Dorsolateral prefrontal cortex (tissue), 120 donors: ENCODE measurements at regions of chr6 and their contacts with region 1.

Region 1: GRCh38 chr6:13336553-13336952 is 8.2 kb upstream of the TBC1D7 start:
- DNase-seq: peak; percentile 72 to 93 (median 80)
- H3K4me3 ChIP-seq: peak overlapping the region in 2 of 59 donors; percentile 11 to 19
- H3K27ac ChIP-seq: peak overlapping the region in 5 of 59 donors; percentile 26 to 68 (median 54)
- H3K27me3 ChIP-seq: no peaks in the 10 kb centered on the region
- CTCF ChIP-seq: peak; percentile 83 to 98 (median 93)

Region 2: DNA sequence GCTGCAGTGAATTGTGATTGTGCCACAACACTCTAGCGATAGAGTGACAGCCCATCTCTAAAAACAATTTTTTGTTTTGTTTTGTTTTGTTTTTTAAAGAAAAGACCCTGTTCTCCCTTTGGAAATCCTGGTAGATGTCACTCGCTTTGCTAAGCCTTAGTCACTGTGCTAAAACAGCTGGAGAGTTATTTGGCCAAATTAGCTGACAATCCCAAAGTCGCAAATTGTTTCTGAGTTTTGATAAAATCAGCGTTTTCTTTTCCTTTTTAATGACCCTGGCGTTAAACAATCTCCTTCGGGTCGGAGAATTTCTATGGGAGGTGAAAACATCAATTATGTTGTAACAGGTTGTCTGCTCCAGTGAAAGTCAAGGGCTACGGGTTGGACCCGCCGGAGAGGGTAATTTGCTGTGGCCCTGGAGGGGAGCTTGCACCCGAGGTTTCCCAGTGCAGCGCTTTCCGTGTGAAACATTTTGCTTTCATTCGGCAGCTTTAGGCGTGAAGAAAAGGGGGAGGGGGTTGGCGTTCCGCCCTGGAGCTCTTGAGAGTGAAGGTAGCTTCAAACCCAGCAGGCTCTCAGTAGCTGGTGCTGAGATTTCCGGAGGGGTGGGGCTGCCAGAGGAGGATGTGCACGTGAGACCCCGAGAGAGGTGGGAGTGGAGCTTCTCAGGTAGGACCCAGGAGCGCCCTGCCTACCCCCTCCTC is 323.4 kb before region 1 on chr6:
- intact Hi-C with region 1: loop called in 1 of 2 experiments (anchors 10 kb)
- DNase-seq: peak; percentile 27 to 67 (median 56)
- H3K4me3 ChIP-seq: peak overlapping the region; percentile 51 to 84 (median 71)
- H3K27ac ChIP-seq: peak overlapping the region in 42 of 59 donors; percentile 12 to 87 (median 66)
- H3K27me3 ChIP-seq: no peaks in the 10 kb centered on the region
- CTCF ChIP-seq: no peak

Region 3: GRCh38 chr6:13351271-13351670 is 14.7 kb after region 1 on chr6:
- intact Hi-C with region 1: no loop called
- DNase-seq: peak in 2 of 10 donors; percentile 37 to 50
- H3K4me3 ChIP-seq: peak overlapping the region in 12 of 59 donors; percentile 1 to 39 (median 20)
- H3K27ac ChIP-seq: peak overlapping the region in 49 of 59 donors; percentile 2 to 77 (median 45)
- H3K27me3 ChIP-seq: no peaks in the 10 kb centered on the region
- CTCF ChIP-seq: no peak

Region 4: GRCh38 chr6:13407709-13408695 is 71.4 kb after region 1 on chr6:
- intact Hi-C with region 1: loop called in 1 of 2 experiments (anchors 5 kb)
- DNase-seq: no peak
- H3K4me3 ChIP-seq: peak overlapping the region in 1 of 59 donors; percentile 33
- H3K27ac ChIP-seq: peak overlapping the region in 58 of 59 donors; percentile 50 to 95 (median 87)
- H3K27me3 ChIP-seq: no peaks in the 10 kb centered on the region
- CTCF ChIP-seq: peak in 1 of 56 donors; percentile 8

Region 5: DNA sequence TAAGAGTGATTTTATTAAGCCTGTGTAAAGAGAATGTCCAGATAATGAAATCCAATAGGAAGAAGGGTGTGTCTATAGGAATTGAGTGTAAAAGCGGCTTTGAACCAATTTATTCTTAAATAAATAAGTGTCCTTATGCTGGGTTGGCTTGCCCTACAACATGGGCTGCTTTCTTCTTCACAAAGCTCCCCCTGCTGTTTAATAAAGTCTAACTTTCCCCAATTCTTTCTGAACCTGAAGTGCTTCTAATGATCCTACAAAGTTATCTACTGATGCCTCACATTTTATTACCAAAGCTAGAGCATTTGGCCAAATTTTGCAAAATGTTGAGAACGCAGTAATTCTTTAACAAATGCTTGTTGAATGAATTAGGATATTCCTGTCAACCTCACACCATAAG is 201.5 kb after region 1 on chr6:
- intact Hi-C with region 1: loop called (anchors 2 to 10 kb)
- DNase-seq: no peak
- H3K4me3 ChIP-seq: no peak overlapping the region
- H3K27ac ChIP-seq: peak overlapping the region in 1 of 59 donors; percentile 8
- H3K27me3 ChIP-seq: no peaks in the 10 kb centered on the region
- CTCF ChIP-seq: peak in 54 of 56 donors; percentile 36 to 78 (median 60)

Region 6: DNA sequence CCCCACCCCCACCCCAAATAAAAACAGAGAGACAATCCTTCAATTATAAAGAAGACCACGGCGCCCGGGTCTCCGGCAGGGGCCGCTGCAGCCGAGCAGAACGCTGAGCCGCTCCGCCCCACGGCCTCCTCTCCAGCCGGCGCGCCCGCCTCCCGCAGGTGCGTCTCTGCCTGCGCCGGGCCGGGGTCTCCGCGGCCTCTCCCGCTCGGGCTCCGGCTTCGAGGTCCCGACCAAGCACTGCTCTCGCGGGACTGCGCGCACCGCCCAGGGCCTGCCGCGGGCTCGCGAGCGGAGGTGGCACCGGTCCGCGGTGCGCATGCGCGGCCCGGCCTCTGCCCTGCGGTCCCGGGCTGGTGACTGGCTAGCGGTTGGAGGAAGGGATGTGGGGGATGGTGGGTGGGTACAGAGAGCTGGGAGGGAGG is 237.6 kb after region 1 on chr6:
- intact Hi-C with region 1: loop called (anchors 2 to 10 kb)
- DNase-seq: peak; percentile 70 to 92 (median 84)
- H3K4me3 ChIP-seq: peak overlapping the region; percentile 46 to 96 (median 87)
- H3K27ac ChIP-seq: peak overlapping the region; percentile 75 to 99 (median 97)
- H3K27me3 ChIP-seq: no peaks in the 10 kb centered on the region
- CTCF ChIP-seq: peak; percentile 26 to 78 (median 60)

Region 7: GRCh38 chr6:14066782-14067406 is 730.3 kb after region 1 on chr6:
- intact Hi-C with region 1: loop called in 1 of 2 experiments (anchors 10 kb)
- DNase-seq: peak in 1 of 10 donors; percentile 28
- H3K4me3 ChIP-seq: no peak overlapping the region
- H3K27ac ChIP-seq: no peak overlapping the region
- H3K27me3 ChIP-seq: peaks cover 0 to 9% (median 0%) of the 10 kb centered on the region in 45 donors
- CTCF ChIP-seq: peak; percentile 34 to 89 (median 69)